Activated naive CD4-positive, alpha-beta T cell treated with anti-CD3 and anti-CD28 coated beads for 36 hours (primary cell): ENCODE measurements at regions of chr20 and their contacts with region 1.

Region 1: GRCh38 chr20:10350188-10350842 is 83.7 kb downstream of the MKKS start:
- DNase-seq: no peak
- H3K4me3 Mint-ChIP-seq: no peak overlapping the region
- H3K27ac Mint-ChIP-seq: peak overlapping the region; percentile 86
- H3K4me1 Mint-ChIP-seq: peaks cover 19% of the 10 kb centered on the region
- H3K27me3 Mint-ChIP-seq: no peaks in the 10 kb centered on the region

Region 2: DNA sequence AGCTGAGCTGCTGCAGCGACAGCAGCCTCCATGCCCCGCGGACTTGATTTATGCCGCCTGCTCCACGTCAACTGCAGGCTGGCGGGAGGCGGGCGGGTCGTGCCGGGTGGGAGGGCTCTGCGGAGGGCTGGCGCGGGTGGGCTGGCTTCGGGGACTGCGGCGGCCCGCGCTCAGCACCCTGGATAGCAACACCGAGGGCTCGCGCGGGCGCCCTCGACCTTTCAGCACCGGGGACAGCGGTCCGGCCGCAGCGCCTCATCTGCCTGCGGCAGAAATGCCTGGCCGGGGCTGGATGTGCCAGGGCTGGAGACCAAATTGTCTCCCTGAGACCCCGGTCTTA is 130.9 kb before region 1 on chr20:
- CTCF ChIA-PET with region 1: no interaction called
- intact Hi-C with region 1: loop called (anchors 2 kb)
- DNase-seq: peak; percentile 67
- H3K4me3 Mint-ChIP-seq: no peak overlapping the region
- H3K27ac Mint-ChIP-seq: no peak overlapping the region
- H3K4me1 Mint-ChIP-seq: peaks cover 13% of the 10 kb centered on the region
- H3K27me3 Mint-ChIP-seq: peaks cover 40% of the 10 kb centered on the region

Region 3: DNA sequence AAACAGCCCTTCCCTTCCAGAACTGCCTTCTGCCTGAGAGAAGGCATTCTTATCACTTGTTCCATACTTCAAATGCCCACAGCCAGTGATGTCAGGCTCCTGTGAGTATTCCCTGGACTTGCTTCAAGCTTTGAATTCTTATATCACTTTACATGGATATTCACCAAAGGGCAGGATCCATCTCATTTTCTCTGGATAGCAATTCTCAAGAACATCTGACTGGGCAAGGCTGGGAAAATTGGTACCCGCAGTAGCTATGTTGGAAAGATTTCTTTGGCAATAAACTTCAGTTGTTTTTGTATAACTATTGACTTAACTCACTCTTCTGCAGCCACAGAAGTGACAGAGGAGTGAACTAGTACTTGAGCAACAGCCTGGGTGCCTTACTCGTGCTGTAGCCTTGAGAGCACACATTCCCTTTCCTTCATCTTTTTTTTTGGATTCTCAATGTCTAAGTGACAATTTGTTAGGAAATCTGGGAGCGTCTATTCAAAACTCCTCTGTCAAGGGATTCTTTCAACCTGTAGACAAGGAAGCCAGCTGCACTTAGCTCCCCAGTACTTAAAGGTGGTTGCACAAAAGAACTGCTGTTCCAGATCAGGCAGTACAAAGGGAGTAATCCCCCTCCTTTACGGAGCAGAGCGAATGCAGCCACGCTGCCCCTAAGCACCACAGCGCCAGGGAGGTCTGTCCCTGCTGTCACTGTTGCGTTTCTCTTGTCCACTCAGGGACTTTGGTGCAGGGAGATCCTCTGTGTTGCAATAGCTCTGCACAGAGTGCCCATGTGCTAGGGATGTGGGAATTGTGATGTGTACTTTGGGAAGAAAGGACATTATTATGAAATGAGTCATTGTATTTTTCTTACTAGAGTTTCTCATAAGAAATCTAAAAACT is 253.9 kb after region 1 on chr20:
- CTCF ChIA-PET with region 1: no interaction called
- intact Hi-C with region 1: loop called (anchors 1 kb)
- DNase-seq: no peak
- H3K4me3 Mint-ChIP-seq: no peak overlapping the region
- H3K27ac Mint-ChIP-seq: no peak overlapping the region
- H3K4me1 Mint-ChIP-seq: peaks cover 4% of the 10 kb centered on the region
- H3K27me3 Mint-ChIP-seq: no peaks in the 10 kb centered on the region